Endothelial cell of umbilical vein (primary cell): ENCODE measurements at regions of chr4 and their contacts with region 1.

Region 1: DNA sequence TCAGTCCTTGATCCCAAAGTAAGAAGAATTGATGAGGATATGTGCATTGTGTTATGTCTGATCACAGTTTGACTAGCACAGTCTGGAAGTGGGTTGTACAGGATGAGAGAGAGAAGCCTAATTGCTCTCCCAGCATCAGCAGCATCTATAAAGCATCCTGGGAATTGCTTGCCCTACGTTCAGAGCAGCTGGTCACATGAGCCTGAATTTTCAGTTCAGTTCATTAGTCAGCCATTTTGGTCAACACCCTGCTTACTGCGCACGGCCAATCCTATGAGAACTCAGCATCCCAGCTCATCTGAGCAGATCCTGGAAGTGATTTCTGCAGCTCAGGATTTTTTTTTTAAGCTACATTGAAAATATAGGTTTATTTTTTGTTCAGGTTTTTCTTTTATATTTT is at the start of gene RUFY3:
- DNase-seq: no peak
- H3K4me3 ChIP-seq: no peak within 1 kb of the TSS
- H3K27ac ChIP-seq: no peak within 1 kb of the TSS
- H3K4me1 ChIP-seq: no peaks in the 10 kb centered on the region
- H3K27me3 ChIP-seq: no peaks in the 10 kb centered on the region
- CTCF ChIP-seq: no peak
- POLR2A ChIP-seq: no peak
- total RNA-seq, gene RUFY3: 42.4 and 52.8 TPM in 2 replicates

Region 2: DNA sequence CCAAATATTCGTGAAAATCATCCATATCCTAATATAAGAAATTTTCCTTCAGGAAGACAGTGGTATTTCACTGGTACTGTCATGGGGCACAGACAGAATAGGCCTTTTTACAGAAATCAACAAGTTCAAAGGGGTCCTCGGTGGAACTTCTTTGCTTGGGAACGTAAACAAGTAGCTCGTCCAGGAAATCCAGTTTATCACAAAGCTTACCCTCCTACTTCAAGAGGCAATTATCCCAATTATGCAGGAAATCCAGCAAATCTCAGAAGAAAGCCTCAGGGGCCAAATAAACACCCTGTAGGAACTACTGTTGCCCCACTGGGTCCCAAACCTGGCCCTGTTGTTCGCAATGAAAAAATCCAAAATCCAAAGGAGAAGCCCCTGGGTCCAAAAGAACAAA is 79.4 kb before region 1 on chr4:
- CTCF ChIA-PET with region 1: no interaction called
- POLR2A ChIA-PET with region 1: no interaction called
- dilution Hi-C with region 1: no loop called
- intact Hi-C with region 1: no loop called
- DNase-seq: no peak
- H3K4me3 ChIP-seq: no peak overlapping the region
- H3K27ac ChIP-seq: no peak overlapping the region
- H3K4me1 ChIP-seq: peaks cover 2% of the 10 kb centered on the region
- H3K27me3 ChIP-seq: peaks cover 0 to 2% of the 10 kb centered on the region in 2 experiments
- CTCF ChIP-seq: no peak
- POLR2A ChIP-seq: no peak

Region 3: GRCh38 chr4:70734168-70734954 is 12.6 kb after region 1 on chr4:
- CTCF ChIA-PET with region 1: interaction called, 17 read pairs
- POLR2A ChIA-PET with region 1: interaction called, 11 read pairs
- dilution Hi-C with region 1: no loop called
- intact Hi-C with region 1: no loop called
- DNase-seq: peak; percentile 84
- H3K4me3 ChIP-seq: peak overlapping the region; percentile 33 to 82 (median 59)
- H3K27ac ChIP-seq: peak overlapping the region; percentile 66
- H3K4me1 ChIP-seq: peaks cover 17% of the 10 kb centered on the region
- H3K27me3 ChIP-seq: no peaks in the 10 kb centered on the region
- CTCF ChIP-seq: no peak
- POLR2A ChIP-seq: no peak